ENCODE measurements at regions of chr1 and their contacts with region 1.

Region 1: GRCh38 chr1:174999216-174999925 is 376 bp upstream of the CACYBP start:
- DNase-seq: peak; percentile 100
- H3K4me3 Mint-ChIP-seq: no peak overlapping the region
- H3K27ac Mint-ChIP-seq: no peak overlapping the region
- H3K4me1 Mint-ChIP-seq: peaks cover 41% of the 10 kb centered on the region
- H3K27me3 Mint-ChIP-seq: no peaks in the 10 kb centered on the region
- CTCF ChIP-seq: no peak

Region 2: GRCh38 chr1:174159252-174160108 is 839.9 kb before region 1 on chr1 and contains the start of gene RABGAP1L:
- CTCF ChIA-PET with region 1: interaction called, 3 read pairs
- POLR2A ChIA-PET with region 1: interaction called, 4 read pairs
- intact Hi-C with region 1: loop called (anchors 5 kb)
- DNase-seq: peak; percentile 96
- H3K4me3 Mint-ChIP-seq: peak within 1 kb of the TSS; percentile 97
- H3K27ac Mint-ChIP-seq: peak within 1 kb of the TSS; percentile 71
- H3K4me1 Mint-ChIP-seq: peaks cover 42% of the 10 kb centered on the region
- H3K27me3 Mint-ChIP-seq: no peaks in the 10 kb centered on the region
- CTCF ChIP-seq: no peak
- total RNA-seq, gene RABGAP1L: 18.2 and 19.0 TPM in 2 replicates

Region 3: DNA sequence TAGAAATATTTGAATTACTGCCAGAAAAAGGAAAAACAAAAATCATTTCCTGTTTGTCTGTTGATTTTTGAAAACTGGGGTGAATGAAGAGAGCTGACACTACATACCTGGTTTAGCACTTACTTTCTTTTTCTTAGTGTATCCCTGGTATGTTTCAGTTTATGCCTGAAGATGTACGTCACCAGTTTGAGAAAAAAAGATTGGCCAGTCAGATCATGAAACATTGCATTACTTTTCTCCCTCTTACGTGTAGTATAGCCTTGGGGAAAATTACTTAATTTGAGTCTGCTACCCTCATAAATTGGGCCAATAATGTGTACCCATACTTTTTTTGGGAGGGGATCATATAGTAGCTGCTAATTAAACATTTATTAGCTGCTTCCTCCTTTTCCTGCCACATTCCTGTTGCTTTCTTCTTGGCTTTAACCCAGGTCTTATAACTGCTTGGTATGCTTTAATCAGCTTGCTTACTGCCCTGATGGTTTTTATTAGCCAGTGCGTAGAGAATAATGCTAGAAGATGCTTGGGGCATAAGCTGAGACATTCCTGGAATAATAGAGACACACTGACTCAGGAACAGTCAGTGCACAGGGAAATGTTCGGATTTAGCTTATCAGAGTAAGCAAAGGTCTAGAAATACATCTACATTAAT is 808.0 kb before region 1 on chr1:
- CTCF ChIA-PET with region 1: no interaction called
- POLR2A ChIA-PET with region 1: no interaction called
- intact Hi-C with region 1: no loop called
- DNase-seq: peak; percentile 22
- H3K4me3 Mint-ChIP-seq: no peak overlapping the region
- H3K27ac Mint-ChIP-seq: no peak overlapping the region
- H3K4me1 Mint-ChIP-seq: peaks cover 5% of the 10 kb centered on the region
- H3K27me3 Mint-ChIP-seq: no peaks in the 10 kb centered on the region
- CTCF ChIP-seq: no peak

Region 4: GRCh38 chr1:174769961-174770549 is 229.3 kb before region 1 on chr1:
- CTCF ChIA-PET with region 1: interaction called, 96 read pairs
- POLR2A ChIA-PET with region 1: interaction called, 20 read pairs
- intact Hi-C with region 1: loop called (anchors 1 kb)
- DNase-seq: peak; percentile 78
- H3K4me3 Mint-ChIP-seq: no peak overlapping the region
- H3K27ac Mint-ChIP-seq: no peak overlapping the region
- H3K4me1 Mint-ChIP-seq: no peaks in the 10 kb centered on the region
- H3K27me3 Mint-ChIP-seq: no peaks in the 10 kb centered on the region
- CTCF ChIP-seq: peak; percentile 80

Region 5: GRCh38 chr1:174815036-174815435 is 184.3 kb before region 1 on chr1:
- CTCF ChIA-PET with region 1: interaction called, 11 read pairs
- POLR2A ChIA-PET with region 1: interaction called, 75 read pairs
- intact Hi-C with region 1: no loop called
- DNase-seq: peak; percentile 87
- H3K4me3 Mint-ChIP-seq: no peak overlapping the region
- H3K27ac Mint-ChIP-seq: peak overlapping the region; percentile 63
- H3K4me1 Mint-ChIP-seq: peaks cover 32% of the 10 kb centered on the region
- H3K27me3 Mint-ChIP-seq: no peaks in the 10 kb centered on the region
- CTCF ChIP-seq: no peak

Region 6: DNA sequence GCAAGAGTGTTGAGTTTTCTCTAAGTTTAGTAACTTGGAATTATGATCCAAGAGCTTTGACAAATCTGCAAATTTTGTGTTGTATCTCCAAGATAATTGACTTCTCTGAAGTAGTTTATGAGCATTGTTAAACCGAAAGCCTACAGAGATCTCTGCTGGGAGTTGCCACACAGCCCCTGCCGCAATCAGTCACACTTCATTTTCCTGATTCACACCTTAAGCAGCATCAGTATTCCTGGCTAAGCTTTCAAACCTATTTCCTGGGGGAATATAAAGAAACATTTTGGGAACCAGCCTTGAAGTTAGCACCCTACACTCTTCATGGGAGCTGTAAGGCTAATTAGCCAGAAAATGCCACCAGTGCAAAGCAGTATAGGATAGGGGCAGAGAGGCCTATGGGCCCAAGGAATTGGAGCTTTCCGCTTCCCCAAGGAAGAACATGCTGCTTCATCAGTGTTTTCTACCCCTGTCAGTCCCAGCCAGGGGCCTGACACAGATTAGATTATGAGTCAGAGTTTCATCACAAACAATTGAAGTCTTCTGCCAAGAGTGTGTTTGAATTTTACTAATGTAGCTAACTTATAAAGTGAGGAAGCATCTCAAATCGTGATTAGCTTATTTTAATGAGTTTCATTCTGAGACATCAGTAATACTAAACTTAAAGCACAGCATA is 22.8 kb before region 1 on chr1:
- CTCF ChIA-PET with region 1: interaction called, 27 read pairs
- POLR2A ChIA-PET with region 1: interaction called, 69 read pairs
- intact Hi-C with region 1: no loop called
- DNase-seq: peak; percentile 83
- H3K4me3 Mint-ChIP-seq: no peak overlapping the region
- H3K27ac Mint-ChIP-seq: no peak overlapping the region
- H3K4me1 Mint-ChIP-seq: peaks cover 15% of the 10 kb centered on the region
- H3K27me3 Mint-ChIP-seq: no peaks in the 10 kb centered on the region
- CTCF ChIP-seq: no peak

Region 7: DNA sequence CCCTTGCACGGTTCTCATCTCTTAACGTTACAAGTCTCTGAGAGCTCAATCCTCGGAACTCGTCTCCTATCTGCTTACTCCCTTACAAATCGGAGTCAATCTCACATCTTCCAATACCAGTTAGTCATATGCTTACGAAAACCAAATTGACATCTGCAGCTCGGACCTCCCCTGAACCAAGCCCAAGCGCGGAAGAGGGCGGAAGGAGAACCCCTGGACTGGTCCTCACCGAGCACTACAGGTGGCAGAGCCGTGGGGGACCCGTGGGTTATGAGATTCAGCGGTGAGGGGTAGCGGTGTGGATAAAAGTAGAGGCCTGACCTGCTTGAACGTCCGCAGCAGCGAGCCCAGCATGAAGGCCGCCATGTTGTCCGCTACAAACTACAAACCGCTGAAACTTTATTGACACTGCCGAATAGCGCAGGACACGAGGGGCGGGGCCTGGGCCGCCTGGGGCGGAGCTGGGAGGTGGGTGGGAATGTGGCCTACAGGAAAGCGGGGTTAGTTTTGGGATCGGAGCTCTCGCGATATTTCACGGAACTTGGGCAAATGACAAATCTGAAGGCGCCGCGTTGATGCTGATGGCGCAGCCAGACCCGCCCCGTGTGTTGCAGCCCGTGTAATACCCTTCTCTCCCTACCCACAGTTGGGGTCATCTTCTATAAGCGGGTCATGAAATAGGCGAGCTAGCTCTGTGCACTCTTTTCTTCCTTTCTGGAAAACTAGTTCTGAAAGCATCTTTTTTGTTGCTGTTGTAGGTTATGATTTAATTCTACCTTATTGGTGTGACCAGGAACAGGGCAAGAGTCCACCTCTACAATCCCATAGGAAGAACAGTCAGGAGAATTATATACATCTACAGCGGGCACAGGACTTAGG is 23.9 kb after region 1 on chr1 and contains the start of gene MRPS14:
- CTCF ChIA-PET with region 1: interaction called, 8 read pairs
- POLR2A ChIA-PET with region 1: interaction called, 331 read pairs
- intact Hi-C with region 1: loop called (anchors 1 kb)
- DNase-seq: peak; percentile 99
- H3K4me3 Mint-ChIP-seq: peak within 1 kb of the TSS; percentile 87
- H3K27ac Mint-ChIP-seq: peak within 1 kb of the TSS; percentile 77
- H3K4me1 Mint-ChIP-seq: peaks cover 20% of the 10 kb centered on the region
- H3K27me3 Mint-ChIP-seq: no peaks in the 10 kb centered on the region
- CTCF ChIP-seq: no peak
- total RNA-seq, gene MRPS14: 36.3 and 40.6 TPM in 2 replicates

Measured in MCF 10A (cell line).